H1 (cell line): ENCODE measurements at regions of chr1 and their contacts with region 1.

Region 1: GRCh38 chr1:24930204-24931145 is at the start of gene RUNX3:
- DNase-seq: peak in 1 of 2 experiments; percentile 83
- H3K4me3 ChIP-seq: peak within 1 kb of the TSS; percentile 27 to 61 (median 40)
- H3K27ac ChIP-seq: no peak within 1 kb of the TSS
- H3K4me1 ChIP-seq: peaks cover 6 to 67% (median 46%) of the 10 kb centered on the region in 4 experiments
- H3K27me3 ChIP-seq: peaks cover 68 to 97% (median 91%) of the 10 kb centered on the region in 4 experiments
- CTCF ChIP-seq: no peak
- EP300 ChIP-seq: no peak
- POLR2A ChIP-seq: no peak
- RAD21 ChIP-seq: no peak
- total RNA-seq, gene RUNX3: 0.48 and 0.82 TPM in 2 replicates

Region 2: DNA sequence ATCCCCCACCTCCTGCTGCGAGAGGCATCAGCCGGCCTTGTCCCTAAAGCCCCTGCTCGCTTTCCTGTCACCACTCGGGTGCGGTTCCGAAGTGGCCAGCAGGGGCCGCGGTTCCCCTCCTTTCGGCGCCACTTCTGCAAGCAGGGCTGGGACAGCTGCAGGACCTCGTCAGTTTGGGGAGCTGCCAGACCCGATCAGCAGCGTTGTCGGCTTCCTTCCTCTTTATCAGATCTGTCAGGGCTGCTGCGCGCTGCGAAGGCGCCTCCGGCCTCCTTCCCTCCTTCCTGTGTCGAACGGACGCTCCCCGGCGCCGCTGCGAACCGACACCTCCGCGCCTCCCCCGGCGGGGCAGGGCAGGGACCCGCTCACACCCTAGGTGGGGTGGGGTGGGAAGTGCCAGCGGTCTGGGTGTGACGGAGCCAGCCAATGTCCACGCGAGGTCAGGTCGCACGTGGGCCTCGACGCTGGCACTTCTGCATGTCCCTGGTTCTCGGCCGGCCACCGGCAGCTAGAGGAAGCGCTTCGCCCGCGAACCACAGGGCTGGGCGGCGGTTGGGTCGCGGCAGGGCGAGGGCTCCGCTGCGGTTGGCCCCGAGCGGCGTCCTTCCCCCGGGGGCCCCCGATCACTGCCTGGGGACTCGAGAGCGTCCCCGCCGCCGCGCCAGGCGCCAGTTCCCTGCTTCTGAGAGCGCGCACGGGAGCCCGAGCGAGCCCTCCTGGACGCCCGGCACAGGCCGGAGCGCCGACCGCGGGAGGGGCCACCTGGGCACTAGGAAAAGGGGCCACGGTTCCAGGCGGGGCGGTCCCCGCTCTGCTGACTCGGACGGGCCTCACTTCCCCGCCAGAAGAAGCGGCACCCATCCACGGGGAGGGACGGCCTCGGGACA is 82.2 kb before region 1 on chr1:
- CTCF ChIA-PET with region 1: interaction called, 27 read pairs
- POLR2A ChIA-PET with region 1: interaction called, 3 read pairs
- DNase-seq: peak; percentile 90 to 99
- H3K4me3 ChIP-seq: peak overlapping the region; percentile 26 to 65 (median 48)
- H3K27ac ChIP-seq: no peak overlapping the region
- H3K4me1 ChIP-seq: peaks cover 0 to 2% (median 0%) of the 10 kb centered on the region in 4 experiments; a peak in 2 of 7 replicates
- H3K27me3 ChIP-seq: peaks cover 0 to 13% (median 6%) of the 10 kb centered on the region in 4 experiments; a peak in 4 of 7 replicates
- CTCF ChIP-seq: peak; percentile 90 to 96 (median 93)
- EP300 ChIP-seq: no peak
- POLR2A ChIP-seq: peak; percentile 36 to 64; a peak in 2 of 3 replicates
- RAD21 ChIP-seq: peak; percentile 87 to 90

Region 3: GRCh38 chr1:24914226-24915069 is 16.0 kb before region 1 on chr1:
- CTCF ChIA-PET with region 1: interaction called, 16 read pairs
- POLR2A ChIA-PET with region 1: interaction called, 8 read pairs
- DNase-seq: no peak
- H3K4me3 ChIP-seq: no peak overlapping the region
- H3K27ac ChIP-seq: no peak overlapping the region
- H3K4me1 ChIP-seq: peaks cover 0 to 8% (median 4%) of the 10 kb centered on the region in 4 experiments; a peak in 4 of 7 replicates
- H3K27me3 ChIP-seq: no peaks in the 10 kb centered on the region
- CTCF ChIP-seq: no peak
- EP300 ChIP-seq: no peak
- POLR2A ChIP-seq: no peak
- RAD21 ChIP-seq: no peak

Region 4: GRCh38 chr1:24952413-24952841 is 22.0 kb after region 1 on chr1:
- CTCF ChIA-PET with region 1: interaction called, 19 read pairs
- POLR2A ChIA-PET with region 1: interaction called, 3 read pairs
- DNase-seq: no peak
- H3K4me3 ChIP-seq: no peak overlapping the region
- H3K27ac ChIP-seq: no peak overlapping the region
- H3K4me1 ChIP-seq: peaks cover 3 to 21% (median 12%) of the 10 kb centered on the region in 4 experiments; a peak in 6 of 7 replicates
- H3K27me3 ChIP-seq: no peaks in the 10 kb centered on the region
- CTCF ChIP-seq: 0 out of 4 replicates have a peak, but pooled peaks of 1 of the 3 experiments have one; percentile 11
- EP300 ChIP-seq: no peak
- POLR2A ChIP-seq: no peak
- RAD21 ChIP-seq: no peak; a peak in 1 of 4 replicates

Region 5: GRCh38 chr1:25001125-25001915 is 70.8 kb after region 1 on chr1:
- CTCF ChIA-PET with region 1: no interaction called
- POLR2A ChIA-PET with region 1: no interaction called
- DNase-seq: no peak
- H3K4me3 ChIP-seq: no peak overlapping the region
- H3K27ac ChIP-seq: no peak overlapping the region
- H3K4me1 ChIP-seq: peaks cover 0 to 4% (median 0%) of the 10 kb centered on the region in 4 experiments; a peak in 2 of 7 replicates
- H3K27me3 ChIP-seq: no peaks in the 10 kb centered on the region
- CTCF ChIP-seq: no peak
- EP300 ChIP-seq: no peak
- POLR2A ChIP-seq: no peak
- RAD21 ChIP-seq: no peak

Region 6: DNA sequence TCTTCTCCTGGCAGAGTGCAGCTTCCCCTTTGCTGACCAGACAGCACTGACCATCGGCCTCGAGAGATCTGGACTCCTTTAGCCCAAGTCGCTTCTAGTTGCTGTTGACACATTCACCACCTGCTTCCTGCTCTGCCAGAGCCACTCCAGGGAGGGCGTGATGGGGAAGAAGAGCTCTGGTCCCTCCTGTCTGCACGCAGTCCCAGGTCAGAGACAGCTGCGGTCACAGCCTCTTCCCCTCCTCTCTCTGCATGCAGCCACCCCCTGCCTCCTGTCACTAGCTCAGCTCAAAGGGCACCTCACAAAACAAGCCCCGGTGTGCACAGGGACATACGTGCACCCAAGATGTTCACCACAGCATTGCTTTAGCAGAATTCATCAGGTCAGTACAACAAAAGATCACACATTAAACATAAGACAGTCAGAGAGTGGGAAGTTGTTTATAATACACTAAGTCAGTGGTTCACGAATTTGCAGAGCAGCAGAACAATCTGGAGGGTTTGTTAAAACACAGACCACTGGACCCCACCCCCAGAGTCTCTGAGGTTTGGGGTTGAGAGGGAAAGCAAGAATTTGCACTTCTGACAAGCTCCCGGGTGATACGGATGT is 169.0 kb after region 1 on chr1:
- CTCF ChIA-PET with region 1: interaction called, 28 read pairs
- POLR2A ChIA-PET with region 1: no interaction called
- DNase-seq: no peak
- H3K4me3 ChIP-seq: no peak overlapping the region
- H3K27ac ChIP-seq: no peak overlapping the region
- H3K4me1 ChIP-seq: no peaks in the 10 kb centered on the region
- H3K27me3 ChIP-seq: no peaks in the 10 kb centered on the region; a peak in 1 of 7 replicates
- CTCF ChIP-seq: no peak
- EP300 ChIP-seq: no peak
- POLR2A ChIP-seq: no peak
- RAD21 ChIP-seq: no peak